ENCODE measurements at regions of chr12 and their contacts with region 1.

Region 1: GRCh38 chr12:6461401-6462233 is 8.9 kb downstream of the VAMP1 start:
- DNase-seq: peak; percentile 92
- ATAC-seq: peak; percentile 81
- H3K4me3 Mint-ChIP-seq: peak overlapping the region; percentile 75
- H3K27ac Mint-ChIP-seq: peak overlapping the region; percentile 100
- H3K4me1 Mint-ChIP-seq: peaks cover 86% of the 10 kb centered on the region
- H3K27me3 Mint-ChIP-seq: no peaks in the 10 kb centered on the region

Region 2: GRCh38 chr12:6215932-6216494 is 245.6 kb before region 1 on chr12:
- CTCF ChIA-PET with region 1: no interaction called
- POLR2A ChIA-PET with region 1: no interaction called
- intact Hi-C with region 1: no loop called
- DNase-seq: peak; percentile 36
- ATAC-seq: peak; percentile 67
- H3K4me3 Mint-ChIP-seq: no peak overlapping the region
- H3K27ac Mint-ChIP-seq: peak overlapping the region; percentile 19
- H3K4me1 Mint-ChIP-seq: peaks cover 21% of the 10 kb centered on the region
- H3K27me3 Mint-ChIP-seq: no peaks in the 10 kb centered on the region

Region 3: DNA sequence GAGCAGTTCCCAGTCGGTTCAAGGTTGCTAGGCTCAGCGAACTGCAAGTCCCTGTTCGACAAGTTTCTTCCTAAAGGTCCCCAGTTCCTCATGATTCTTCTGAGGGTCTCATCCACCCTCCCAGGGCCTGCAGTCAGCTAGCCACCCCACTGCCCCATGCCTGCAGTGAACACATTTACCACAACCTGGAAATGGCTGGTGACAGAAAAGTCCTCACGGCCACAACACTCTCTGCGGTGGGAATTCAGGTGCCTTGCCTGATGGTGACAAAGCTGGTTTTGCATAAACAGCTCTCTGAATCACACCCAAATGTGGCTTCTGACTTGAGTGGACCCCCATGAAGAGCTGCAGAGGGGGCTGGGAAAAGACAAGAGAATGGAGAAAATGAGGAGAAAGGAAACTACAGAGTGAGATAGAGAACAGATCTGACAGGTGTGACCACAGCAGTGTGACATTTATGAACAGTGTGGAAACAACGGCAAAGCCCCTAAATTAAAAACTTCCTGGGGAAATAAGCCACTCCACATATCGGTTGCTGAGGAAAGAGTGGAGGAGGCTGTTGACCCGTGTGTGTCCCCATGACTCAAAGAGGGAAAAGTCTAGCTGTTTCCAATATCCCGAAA is 18.1 kb before region 1 on chr12:
- CTCF ChIA-PET with region 1: interaction called, 130 read pairs
- POLR2A ChIA-PET with region 1: interaction called, 35 read pairs
- intact Hi-C with region 1: loop called (anchors 1 kb)
- DNase-seq: peak; percentile 76
- ATAC-seq: peak; percentile 65
- H3K4me3 Mint-ChIP-seq: peak overlapping the region; percentile 86
- H3K27ac Mint-ChIP-seq: peak overlapping the region; percentile 94
- H3K4me1 Mint-ChIP-seq: peaks cover 71% of the 10 kb centered on the region
- H3K27me3 Mint-ChIP-seq: no peaks in the 10 kb centered on the region

Region 4: DNA sequence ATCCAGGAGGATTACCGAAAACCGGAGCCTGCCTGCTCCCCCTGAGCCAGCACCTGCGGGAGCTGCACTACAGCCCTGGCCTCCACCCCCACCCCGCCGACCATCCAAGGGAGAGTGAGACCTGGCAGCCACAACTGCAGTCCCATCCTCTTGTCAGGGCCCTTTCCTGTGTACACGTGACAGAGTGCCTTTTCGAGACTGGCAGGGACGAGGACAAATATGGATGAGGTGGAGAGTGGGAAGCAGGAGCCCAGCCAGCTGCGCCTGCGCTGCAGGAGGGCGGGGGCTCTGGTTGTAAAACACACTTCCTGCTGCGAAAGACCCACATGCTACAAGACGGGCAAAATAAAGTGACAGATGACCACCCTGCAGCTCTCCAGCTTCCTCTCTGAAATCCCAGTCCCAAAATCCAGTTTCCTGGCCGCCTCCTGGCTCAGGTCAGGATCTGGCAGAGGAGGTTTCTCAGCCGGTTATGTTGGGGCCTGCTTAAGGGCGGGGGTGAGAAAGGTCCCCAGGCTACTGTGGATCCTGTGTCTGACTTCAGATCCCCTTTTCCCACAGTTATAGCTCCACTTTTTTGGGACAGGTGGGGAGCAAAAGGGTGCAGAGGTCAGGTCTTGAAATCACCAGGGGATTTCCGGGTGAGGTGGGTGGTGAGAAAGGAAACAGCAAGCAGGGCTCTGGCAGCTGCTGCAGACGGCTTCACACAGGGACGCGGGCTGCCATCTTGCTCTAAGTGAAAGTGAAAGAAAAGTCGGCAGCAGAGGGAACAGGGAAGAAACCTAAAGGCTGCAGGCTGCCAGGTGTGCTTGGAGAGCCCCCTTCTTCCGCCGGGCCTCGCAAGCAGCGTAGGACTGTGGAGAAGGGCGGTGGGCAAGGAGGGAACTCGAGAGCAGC is 10.0 kb before region 1 on chr12 and contains the start of gene TAPBPL:
- CTCF ChIA-PET with region 1: interaction called, 130 read pairs
- POLR2A ChIA-PET with region 1: interaction called, 35 read pairs
- intact Hi-C with region 1: loop called (anchors 1 kb)
- DNase-seq: peak; percentile 91
- ATAC-seq: peak; percentile 84
- H3K4me3 Mint-ChIP-seq: peak within 1 kb of the TSS; percentile 100
- H3K27ac Mint-ChIP-seq: peak within 1 kb of the TSS; percentile 99
- H3K4me1 Mint-ChIP-seq: peaks cover 67% of the 10 kb centered on the region
- H3K27me3 Mint-ChIP-seq: no peaks in the 10 kb centered on the region
- total RNA-seq, gene TAPBPL: 27.4 to 40.8 TPM

Region 5: GRCh38 chr12:6524648-6525047 is 63.0 kb after region 1 on chr12:
- CTCF ChIA-PET with region 1: no interaction called
- POLR2A ChIA-PET with region 1: no interaction called
- intact Hi-C with region 1: no loop called
- DNase-seq: no peak
- ATAC-seq: no peak
- H3K4me3 Mint-ChIP-seq: no peak overlapping the region
- H3K27ac Mint-ChIP-seq: peak overlapping the region; percentile 12
- H3K4me1 Mint-ChIP-seq: no peaks in the 10 kb centered on the region
- H3K27me3 Mint-ChIP-seq: no peaks in the 10 kb centered on the region

Measured in activated CD4-positive, alpha-beta T cell treated with anti-CD3 and anti-CD28 coated beads for 36 hours (primary cell).